Activated B cell treated with CpG ODN at 0.5 μM for 24 hours (primary cell): ENCODE measurements at regions of chr15 and their contacts with region 1.

Region 1: DNA sequence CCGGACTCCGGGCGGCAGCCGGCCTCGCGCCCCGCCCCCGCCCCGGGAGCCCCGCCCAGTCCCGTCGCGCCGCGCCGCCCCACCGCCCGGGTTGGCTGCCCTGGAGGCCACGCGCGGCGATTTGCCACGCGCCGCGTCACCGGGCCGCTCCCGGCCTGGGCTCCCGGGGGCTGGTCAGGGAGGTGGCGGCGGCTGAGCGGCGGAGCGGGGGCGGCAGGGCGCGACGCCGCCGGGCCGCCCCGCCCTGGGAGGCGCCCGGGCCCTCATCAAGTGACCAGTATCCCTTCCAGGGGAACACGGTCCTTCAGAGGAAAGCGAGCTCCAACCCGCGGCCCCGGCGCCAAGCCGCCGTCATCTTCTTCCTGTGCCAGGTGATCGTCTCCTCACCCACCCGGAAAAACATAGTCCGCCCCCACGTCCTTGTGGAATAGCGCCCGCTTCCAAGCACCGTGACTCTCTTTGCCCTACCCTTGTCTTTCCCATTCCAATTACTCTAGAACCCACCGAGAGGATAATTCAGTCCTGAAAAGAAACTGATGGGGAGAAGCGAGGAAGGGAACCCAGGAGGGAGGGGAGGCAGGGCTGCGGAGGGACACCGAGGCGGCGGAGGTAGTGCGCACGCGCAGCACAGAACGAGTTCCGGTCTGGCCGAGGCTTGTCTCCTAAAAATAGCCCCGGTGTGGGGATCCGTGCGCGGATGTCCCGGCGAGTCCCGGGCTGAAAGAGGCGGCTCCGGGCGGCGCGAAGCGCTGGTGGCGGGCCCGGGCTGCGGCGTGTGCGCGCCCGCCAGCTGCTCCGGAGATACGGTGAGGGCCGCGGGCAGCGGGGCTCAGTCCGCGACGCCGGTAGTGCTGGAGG is at the start of gene MEF2A:
- DNase-seq: peak; percentile 90
- ATAC-seq: peak; percentile 65
- H3K4me3 Mint-ChIP-seq: peak within 1 kb of the TSS; percentile 100
- H3K27ac Mint-ChIP-seq: peak within 1 kb of the TSS; percentile 99
- H3K4me1 Mint-ChIP-seq: peaks cover 55% of the 10 kb centered on the region
- H3K27me3 Mint-ChIP-seq: no peaks in the 10 kb centered on the region
- CTCF ChIP-seq: no peak
- total RNA-seq, gene MEF2A: 75.7 and 88.3 TPM in 2 replicates

Region 2: DNA sequence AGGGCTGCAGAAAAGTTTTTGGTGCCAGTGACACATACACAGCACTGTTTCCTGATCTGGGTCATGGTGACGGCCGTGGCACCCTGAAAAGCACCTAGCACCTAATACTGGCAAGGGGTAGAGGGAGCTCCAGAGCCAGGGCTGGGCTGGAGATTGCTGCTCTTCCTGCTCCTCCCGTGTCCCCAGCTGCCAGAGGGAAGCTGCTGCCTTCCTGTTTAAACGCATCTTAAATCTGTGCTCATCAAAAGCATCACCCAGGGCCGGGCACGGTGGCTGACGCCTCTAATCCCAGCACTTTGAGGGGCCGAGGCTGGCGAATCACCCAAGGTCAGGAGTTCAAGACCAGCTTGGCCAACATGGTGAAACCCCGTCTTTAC is 156.4 kb before region 1 on chr15:
- CTCF ChIA-PET with region 1: interaction called, 5 read pairs
- POLR2A ChIA-PET with region 1: interaction called, 13 read pairs
- intact Hi-C with region 1: loop called (anchors 10 kb)
- DNase-seq: no peak
- ATAC-seq: peak; percentile 50
- H3K4me3 Mint-ChIP-seq: no peak overlapping the region
- H3K27ac Mint-ChIP-seq: no peak overlapping the region
- H3K4me1 Mint-ChIP-seq: peaks cover 5% of the 10 kb centered on the region
- H3K27me3 Mint-ChIP-seq: no peaks in the 10 kb centered on the region
- CTCF ChIP-seq: no peak

Region 3: GRCh38 chr15:99486371-99487336 is 78.9 kb before region 1 on chr15:
- CTCF ChIA-PET with region 1: no interaction called
- POLR2A ChIA-PET with region 1: interaction called, 21 read pairs
- intact Hi-C with region 1: no loop called
- DNase-seq: no peak
- ATAC-seq: peak; percentile 75
- H3K4me3 Mint-ChIP-seq: peak overlapping the region; percentile 77
- H3K27ac Mint-ChIP-seq: no peak overlapping the region
- H3K4me1 Mint-ChIP-seq: peaks cover 25% of the 10 kb centered on the region
- H3K27me3 Mint-ChIP-seq: no peaks in the 10 kb centered on the region
- CTCF ChIP-seq: no peak

Region 4: DNA sequence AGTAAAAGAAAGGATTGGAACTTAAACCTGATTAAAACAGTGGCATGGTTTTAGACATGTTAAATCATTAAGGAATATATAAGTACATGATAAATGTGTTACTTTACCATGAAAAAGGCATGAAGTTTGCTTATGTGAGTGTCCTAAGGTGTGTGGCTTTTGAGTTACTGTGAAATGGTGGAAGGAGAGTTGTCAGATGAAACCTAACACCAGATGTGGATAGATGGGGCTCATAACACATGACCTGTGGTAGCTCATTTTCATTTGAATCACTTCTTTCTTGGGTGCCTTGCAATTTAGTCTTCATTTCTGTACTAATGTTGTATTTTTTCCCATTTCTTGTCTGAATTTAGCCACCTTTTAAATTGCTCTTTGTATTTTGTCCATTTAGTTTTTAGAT is 13.3 kb after region 1 on chr15:
- CTCF ChIA-PET with region 1: no interaction called
- POLR2A ChIA-PET with region 1: interaction called, 16 read pairs
- intact Hi-C with region 1: loop called (anchors 1 kb)
- DNase-seq: no peak
- ATAC-seq: no peak
- H3K4me3 Mint-ChIP-seq: peak overlapping the region; percentile 29
- H3K27ac Mint-ChIP-seq: peak overlapping the region; percentile 4
- H3K4me1 Mint-ChIP-seq: peaks cover 83% of the 10 kb centered on the region
- H3K27me3 Mint-ChIP-seq: no peaks in the 10 kb centered on the region
- CTCF ChIP-seq: no peak

Region 5: GRCh38 chr15:99592145-99592791 is 26.7 kb after region 1 on chr15:
- CTCF ChIA-PET with region 1: no interaction called
- POLR2A ChIA-PET with region 1: no interaction called
- intact Hi-C with region 1: no loop called
- DNase-seq: no peak
- ATAC-seq: no peak
- H3K4me3 Mint-ChIP-seq: no peak overlapping the region
- H3K27ac Mint-ChIP-seq: peak overlapping the region; percentile 25
- H3K4me1 Mint-ChIP-seq: peaks cover 71% of the 10 kb centered on the region
- H3K27me3 Mint-ChIP-seq: no peaks in the 10 kb centered on the region
- CTCF ChIP-seq: no peak

Region 6: GRCh38 chr15:99631255-99631654 is 65.7 kb after region 1 on chr15:
- CTCF ChIA-PET with region 1: no interaction called
- POLR2A ChIA-PET with region 1: interaction called, 12 read pairs
- intact Hi-C with region 1: loop called (anchors 2 kb)
- DNase-seq: no peak
- ATAC-seq: peak; percentile 97
- H3K4me3 Mint-ChIP-seq: peak overlapping the region; percentile 73
- H3K27ac Mint-ChIP-seq: peak overlapping the region; percentile 92
- H3K4me1 Mint-ChIP-seq: peaks cover 77% of the 10 kb centered on the region
- H3K27me3 Mint-ChIP-seq: no peaks in the 10 kb centered on the region
- CTCF ChIP-seq: no peak